ENCODE measurements at regions of chr2 and their contacts with region 1.

Region 1: GRCh38 chr2:113203901-113204519 is 30.2 kb downstream of the PSD4 start:
- DNase-seq: peak; percentile 80

Region 2: GRCh38 chr2:113248997-113249770 is 45.2 kb after region 1 on chr2:
- intact Hi-C with region 1: loop called in 1 of 2 experiments (anchors 5 kb)
- DNase-seq: peak; percentile 94

Region 3: DNA sequence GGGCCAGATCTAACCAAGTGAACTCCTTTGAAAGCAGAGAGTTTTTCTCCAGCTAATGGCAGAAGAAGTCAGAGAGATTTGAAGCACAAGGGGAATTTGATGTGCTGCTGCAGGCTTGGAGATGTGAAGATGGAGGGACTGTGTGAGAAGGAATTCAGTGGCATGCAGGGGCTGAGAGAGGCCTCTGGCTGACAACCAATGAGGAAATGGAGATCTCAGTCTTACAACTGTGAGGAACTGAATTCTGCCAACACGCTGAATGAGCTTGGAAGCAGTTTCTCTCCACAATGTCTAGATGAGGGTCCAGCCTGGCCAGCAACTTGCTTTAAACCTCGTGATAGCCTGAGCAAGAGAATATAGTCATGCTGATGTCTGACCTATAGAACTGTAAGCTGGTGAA is 1014.4 kb after region 1 on chr2:
- intact Hi-C with region 1: no loop called
- DNase-seq: no peak